GM10248 (cell line): ENCODE measurements at regions of chr10 and their contacts with region 1.

Region 1: GRCh38 chr10:97292097-97292862 is at the start of gene ARHGAP19:
- DNase-seq: peak; percentile 95
- CTCF ChIP-seq: no peak

Region 2: GRCh38 chr10:97278491-97278989 is 13.7 kb before region 1 on chr10:
- CTCF ChIA-PET with region 1: interaction called, 23 read pairs
- POLR2A ChIA-PET with region 1: no interaction called
- DNase-seq: peak; percentile 44
- CTCF ChIP-seq: peak; percentile 52